ENCODE measurements at regions of chr9 and their contacts with region 1.

Region 1: DNA sequence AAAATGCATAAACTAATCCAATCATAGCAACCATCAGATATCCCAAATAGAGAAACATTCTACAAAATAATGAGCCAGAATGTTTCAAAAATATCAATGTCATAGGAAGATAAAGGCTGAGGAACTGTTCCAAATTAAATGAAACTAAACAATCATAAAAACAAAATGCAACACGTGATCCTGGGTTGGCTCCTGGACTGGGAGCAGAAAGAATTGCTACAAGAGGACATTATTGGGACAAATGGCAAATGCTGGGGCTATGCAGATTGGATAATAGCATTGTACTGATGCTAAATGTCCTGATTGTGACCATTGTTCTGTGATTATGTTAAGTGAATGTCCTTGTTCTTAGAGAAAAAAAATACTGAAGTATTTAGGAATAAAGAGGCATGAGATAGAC is 54.2 kb upstream of the AKNA start:
- DNase-seq: no peak
- H3K4me3 ChIP-seq: no peak overlapping the region
- CTCF ChIP-seq: no peak

Region 2: GRCh38 chr9:114525505-114525904 is 83.5 kb after region 1 on chr9:
- in situ Hi-C with region 1: loop called (anchors 5 kb)
- DNase-seq: no peak
- H3K4me3 ChIP-seq: no peak overlapping the region
- CTCF ChIP-seq: no peak

Region 3: GRCh38 chr9:114559830-114560513 is 118.0 kb after region 1 on chr9:
- in situ Hi-C with region 1: no loop called
- DNase-seq: no peak
- H3K4me3 ChIP-seq: no peak overlapping the region
- CTCF ChIP-seq: no peak